AG04450 (cell line): ENCODE measurements at regions of chr2 and their contacts with region 1.

Region 1: GRCh38 chr2:164841719-164842623 is at the start of gene COBLL1:
- DNase-seq: no peak
- H3K4me3 ChIP-seq: peak within 1 kb of the TSS; percentile 70
- H3K27ac ChIP-seq: peak within 1 kb of the TSS; percentile 23
- H3K27me3 ChIP-seq: peaks cover 7% of the 10 kb centered on the region
- CTCF ChIP-seq: peak; percentile 85
- polyA plus RNA-seq, gene COBLL1: 0.48 and 0.79 TPM in 2 replicates

Region 2: GRCh38 chr2:164754157-164755093 is 87.5 kb before region 1 on chr2:
- CTCF ChIA-PET with region 1: no interaction called
- POLR2A ChIA-PET with region 1: no interaction called
- DNase-seq: no peak
- H3K4me3 ChIP-seq: no peak overlapping the region
- H3K27ac ChIP-seq: no peak overlapping the region
- H3K27me3 ChIP-seq: no peaks in the 10 kb centered on the region
- CTCF ChIP-seq: no peak

Region 3: GRCh38 chr2:164808776-164809175 is 33.2 kb before region 1 on chr2:
- CTCF ChIA-PET with region 1: interaction called, 16 read pairs
- POLR2A ChIA-PET with region 1: no interaction called
- DNase-seq: no peak
- H3K4me3 ChIP-seq: no peak overlapping the region
- H3K27ac ChIP-seq: no peak overlapping the region
- H3K27me3 ChIP-seq: no peaks in the 10 kb centered on the region
- CTCF ChIP-seq: no peak

Region 4: DNA sequence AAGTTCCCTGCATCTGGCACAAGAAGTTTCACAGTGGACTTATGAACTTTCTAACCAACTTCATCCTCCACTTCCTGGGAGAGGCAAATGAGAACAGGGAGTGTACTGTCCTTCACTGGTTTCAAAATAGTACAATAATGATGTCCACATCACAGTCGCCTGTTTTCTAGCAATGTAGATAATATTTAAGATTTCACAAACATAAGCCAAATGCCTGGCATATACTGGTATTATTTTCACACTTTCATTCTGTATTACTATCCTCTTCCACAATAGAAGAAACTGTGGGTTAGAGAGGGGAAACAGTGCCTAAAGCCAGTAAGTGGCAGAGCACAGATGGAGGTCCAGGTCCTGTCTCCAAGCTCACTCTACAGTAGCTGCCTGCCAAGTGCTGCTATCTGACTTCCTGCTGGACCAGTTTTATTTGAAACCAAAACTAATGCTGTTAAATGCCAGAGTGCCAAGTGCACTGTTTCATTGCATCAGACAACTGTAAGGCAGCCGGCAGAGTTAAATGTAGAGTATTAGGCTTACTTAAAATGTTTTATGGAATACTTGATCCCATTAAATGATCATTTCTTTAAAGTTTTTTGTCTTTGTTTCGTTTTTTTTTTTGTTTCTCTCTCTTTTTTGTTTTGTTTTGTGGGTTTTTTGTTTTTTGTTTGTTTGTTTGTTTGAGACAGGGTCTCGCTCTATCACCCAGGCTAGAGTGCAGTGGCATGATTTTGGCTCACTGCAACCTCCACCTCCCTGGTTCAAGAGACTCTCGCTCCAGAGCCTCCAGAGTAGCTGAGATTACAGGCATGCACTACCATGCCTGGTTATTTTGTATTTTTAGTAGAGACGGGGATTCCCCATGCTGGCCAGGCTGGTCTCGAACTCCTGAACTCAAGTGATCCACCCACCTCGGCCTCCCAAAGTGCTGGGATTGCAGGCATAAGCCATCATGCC is 15.4 kb before region 1 on chr2:
- CTCF ChIA-PET with region 1: interaction called, 17 read pairs
- POLR2A ChIA-PET with region 1: no interaction called
- DNase-seq: no peak
- H3K4me3 ChIP-seq: no peak overlapping the region
- H3K27ac ChIP-seq: no peak overlapping the region
- H3K27me3 ChIP-seq: peaks cover 2% of the 10 kb centered on the region
- CTCF ChIP-seq: no peak

Region 5: GRCh38 chr2:164831887-164832286 is 10.1 kb before region 1 on chr2:
- CTCF ChIA-PET with region 1: interaction called, 17 read pairs
- POLR2A ChIA-PET with region 1: no interaction called
- DNase-seq: no peak
- H3K4me3 ChIP-seq: no peak overlapping the region
- H3K27ac ChIP-seq: no peak overlapping the region
- H3K27me3 ChIP-seq: no peaks in the 10 kb centered on the region
- CTCF ChIP-seq: no peak

Region 6: GRCh38 chr2:164859251-164859800 is 17.4 kb after region 1 on chr2:
- CTCF ChIA-PET with region 1: interaction called, 29 read pairs
- POLR2A ChIA-PET with region 1: no interaction called
- DNase-seq: no peak
- H3K4me3 ChIP-seq: no peak overlapping the region
- H3K27ac ChIP-seq: no peak overlapping the region
- H3K27me3 ChIP-seq: no peaks in the 10 kb centered on the region
- CTCF ChIP-seq: no peak

Region 7: DNA sequence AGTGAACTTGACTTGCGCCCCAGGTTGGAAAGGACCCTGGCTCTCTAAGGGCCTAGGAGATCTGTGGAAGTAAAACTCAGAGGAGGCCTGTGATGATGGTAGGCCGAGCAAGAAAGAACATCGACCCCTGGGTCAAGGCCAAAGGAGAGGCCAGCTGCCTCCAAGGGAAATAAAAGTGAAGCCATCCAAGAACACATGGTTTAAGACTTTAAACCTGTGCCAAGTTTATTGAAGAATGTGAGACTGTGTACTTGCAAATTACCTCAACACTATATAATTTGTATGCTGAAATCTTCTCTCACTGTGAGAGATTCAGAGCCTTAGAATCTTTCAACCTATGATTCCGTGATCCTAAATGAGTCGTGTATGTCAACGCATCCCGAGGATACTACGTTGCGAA is 40.3 kb after region 1 on chr2:
- CTCF ChIA-PET with region 1: interaction called, 10 read pairs
- POLR2A ChIA-PET with region 1: no interaction called
- DNase-seq: no peak
- H3K4me3 ChIP-seq: no peak overlapping the region
- H3K27ac ChIP-seq: no peak overlapping the region
- H3K27me3 ChIP-seq: no peaks in the 10 kb centered on the region
- CTCF ChIP-seq: no peak

Region 8: DNA sequence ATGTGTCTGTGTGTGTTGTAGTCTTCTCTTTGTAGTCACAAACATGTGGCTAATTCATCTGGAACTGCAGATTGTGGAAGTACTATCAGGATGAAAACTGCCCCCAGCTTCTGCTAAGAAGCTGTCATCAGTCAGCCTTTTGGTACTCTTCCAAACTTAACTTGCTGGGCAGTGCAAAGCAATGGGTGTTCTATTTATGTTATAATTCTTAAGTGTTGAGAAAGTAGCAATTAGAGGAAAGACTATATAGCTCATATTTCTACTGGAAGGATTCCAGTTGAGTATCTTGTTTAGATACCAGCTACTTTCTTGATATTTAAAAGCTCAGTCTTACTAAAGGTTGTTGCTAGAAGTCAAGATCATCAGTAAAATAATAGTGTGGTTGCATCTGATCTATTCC is 61.2 kb after region 1 on chr2:
- CTCF ChIA-PET with region 1: interaction called, 15 read pairs
- POLR2A ChIA-PET with region 1: no interaction called
- DNase-seq: peak; percentile 27
- H3K4me3 ChIP-seq: no peak overlapping the region
- H3K27ac ChIP-seq: no peak overlapping the region
- H3K27me3 ChIP-seq: no peaks in the 10 kb centered on the region
- CTCF ChIP-seq: no peak

Region 9: GRCh38 chr2:165120740-165121467 is 278.9 kb after region 1 on chr2:
- CTCF ChIA-PET with region 1: no interaction called
- POLR2A ChIA-PET with region 1: no interaction called
- DNase-seq: no peak
- H3K4me3 ChIP-seq: no peak overlapping the region
- H3K27ac ChIP-seq: no peak overlapping the region
- H3K27me3 ChIP-seq: no peaks in the 10 kb centered on the region
- CTCF ChIP-seq: no peak